CD4-positive, alpha-beta T cell (primary cell): ENCODE measurements at regions of chr5 and their contacts with region 1.

Region 1: GRCh38 chr5:172714491-172715421 is 56.2 kb downstream of the DUSP1 start:
- DNase-seq: peak; percentile 44 to 85 (median 62)
- ATAC-seq: peak; percentile 80
- H3K4me3 ChIP-seq: no peak overlapping the region
- H3K4me3 Mint-ChIP-seq: no peak overlapping the region
- H3K27ac ChIP-seq: no peak overlapping the region
- H3K27ac Mint-ChIP-seq: no peak overlapping the region
- H3K4me1 ChIP-seq: peaks cover 29% of the 10 kb centered on the region
- H3K4me1 Mint-ChIP-seq: peaks cover 8% of the 10 kb centered on the region
- H3K27me3 ChIP-seq: no peaks in the 10 kb centered on the region
- H3K27me3 Mint-ChIP-seq: peaks cover 5% of the 10 kb centered on the region
- CTCF ChIP-seq: peak; percentile 81

Region 2: DNA sequence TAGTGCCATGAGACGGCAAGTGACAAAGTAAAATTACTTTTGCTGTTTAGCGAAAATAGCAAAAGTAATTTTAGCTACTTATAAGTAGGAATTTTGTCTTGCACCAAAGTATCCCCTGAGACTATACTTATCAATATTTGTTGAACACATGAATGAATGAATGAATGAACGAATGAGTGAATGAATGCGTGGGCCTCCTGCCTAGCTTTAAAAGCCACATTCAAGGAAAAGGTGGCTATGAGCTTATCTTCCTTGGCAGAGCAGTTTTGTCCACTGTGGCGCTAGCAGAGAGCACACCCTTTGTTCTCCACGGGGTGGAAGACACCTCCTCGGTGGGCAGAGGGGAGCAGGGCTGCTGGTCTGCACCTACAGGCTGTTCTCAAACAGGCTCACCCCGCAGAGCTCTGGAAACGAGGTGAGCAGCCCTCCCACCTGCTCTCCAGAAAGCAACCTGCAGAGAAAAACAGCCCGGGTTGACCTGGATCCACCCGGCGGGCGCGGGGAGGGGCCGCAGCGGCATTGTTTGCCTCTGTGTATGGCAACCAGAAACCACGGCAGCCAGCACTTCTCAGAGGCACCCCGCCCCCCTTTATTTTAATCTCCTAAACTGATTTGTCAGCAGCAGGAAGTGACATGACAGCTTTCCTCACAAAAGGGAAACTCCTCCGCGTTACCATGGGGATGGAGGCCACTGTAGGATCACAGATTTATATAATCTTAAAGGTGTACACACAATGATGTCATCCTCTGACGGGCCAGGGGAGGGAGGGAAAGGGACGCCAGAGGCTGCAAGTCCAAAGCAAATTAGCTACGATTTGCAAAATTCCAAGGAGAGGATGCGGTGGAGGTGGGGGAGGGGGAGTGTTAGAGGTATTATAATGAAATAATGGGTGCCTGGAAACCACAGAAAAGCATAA is 50.4 kb after region 1 on chr5:
- CTCF ChIA-PET with region 1: interaction called, 38 read pairs
- POLR2A ChIA-PET with region 1: interaction called, 49 read pairs
- intact Hi-C with region 1: loop called (anchors 2 kb)
- DNase-seq: peak; percentile 87 to 100 (median 94)
- ATAC-seq: peak; percentile 75
- H3K4me3 ChIP-seq: peak overlapping the region; percentile 44
- H3K4me3 Mint-ChIP-seq: peak overlapping the region; percentile 71
- H3K27ac ChIP-seq: peak overlapping the region; percentile 89
- H3K27ac Mint-ChIP-seq: peak overlapping the region; percentile 95
- H3K4me1 ChIP-seq: peaks cover 59% of the 10 kb centered on the region
- H3K4me1 Mint-ChIP-seq: peaks cover 55% of the 10 kb centered on the region
- H3K27me3 ChIP-seq: no peaks in the 10 kb centered on the region
- H3K27me3 Mint-ChIP-seq: no peaks in the 10 kb centered on the region
- CTCF ChIP-seq: no peak

Region 3: GRCh38 chr5:172777881-172778814 is 63.4 kb after region 1 on chr5:
- CTCF ChIA-PET with region 1: interaction called, 38 read pairs
- POLR2A ChIA-PET with region 1: interaction called, 49 read pairs
- intact Hi-C with region 1: loop called (anchors 1 to 2 kb)
- DNase-seq: peak in 3 of 14 experiments; percentile 22 to 64 (median 54)
- ATAC-seq: peak; percentile 56
- H3K4me3 ChIP-seq: peak overlapping the region; percentile 27
- H3K4me3 Mint-ChIP-seq: peak overlapping the region; percentile 68
- H3K27ac ChIP-seq: peak overlapping the region; percentile 68 to 93
- H3K27ac Mint-ChIP-seq: peak overlapping the region; percentile 95
- H3K4me1 ChIP-seq: peaks cover 43% of the 10 kb centered on the region
- H3K4me1 Mint-ChIP-seq: peaks cover 45% of the 10 kb centered on the region
- H3K27me3 ChIP-seq: no peaks in the 10 kb centered on the region
- H3K27me3 Mint-ChIP-seq: no peaks in the 10 kb centered on the region
- CTCF ChIP-seq: no peak

Region 4: GRCh38 chr5:172932313-172933017 is 217.7 kb after region 1 on chr5:
- CTCF ChIA-PET with region 1: interaction called, 99 read pairs
- POLR2A ChIA-PET with region 1: interaction called, 5 read pairs
- intact Hi-C with region 1: loop called (anchors 1 kb)
- DNase-seq: peak; percentile 61 to 87 (median 70)
- ATAC-seq: peak; percentile 99
- H3K4me3 ChIP-seq: no peak overlapping the region
- H3K4me3 Mint-ChIP-seq: no peak overlapping the region
- H3K27ac ChIP-seq: no peak overlapping the region
- H3K27ac Mint-ChIP-seq: peak overlapping the region; percentile 23
- H3K4me1 ChIP-seq: peaks cover 6% of the 10 kb centered on the region
- H3K4me1 Mint-ChIP-seq: peaks cover 7% of the 10 kb centered on the region
- H3K27me3 ChIP-seq: no peaks in the 10 kb centered on the region
- H3K27me3 Mint-ChIP-seq: no peaks in the 10 kb centered on the region
- CTCF ChIP-seq: peak; percentile 87

Region 5: DNA sequence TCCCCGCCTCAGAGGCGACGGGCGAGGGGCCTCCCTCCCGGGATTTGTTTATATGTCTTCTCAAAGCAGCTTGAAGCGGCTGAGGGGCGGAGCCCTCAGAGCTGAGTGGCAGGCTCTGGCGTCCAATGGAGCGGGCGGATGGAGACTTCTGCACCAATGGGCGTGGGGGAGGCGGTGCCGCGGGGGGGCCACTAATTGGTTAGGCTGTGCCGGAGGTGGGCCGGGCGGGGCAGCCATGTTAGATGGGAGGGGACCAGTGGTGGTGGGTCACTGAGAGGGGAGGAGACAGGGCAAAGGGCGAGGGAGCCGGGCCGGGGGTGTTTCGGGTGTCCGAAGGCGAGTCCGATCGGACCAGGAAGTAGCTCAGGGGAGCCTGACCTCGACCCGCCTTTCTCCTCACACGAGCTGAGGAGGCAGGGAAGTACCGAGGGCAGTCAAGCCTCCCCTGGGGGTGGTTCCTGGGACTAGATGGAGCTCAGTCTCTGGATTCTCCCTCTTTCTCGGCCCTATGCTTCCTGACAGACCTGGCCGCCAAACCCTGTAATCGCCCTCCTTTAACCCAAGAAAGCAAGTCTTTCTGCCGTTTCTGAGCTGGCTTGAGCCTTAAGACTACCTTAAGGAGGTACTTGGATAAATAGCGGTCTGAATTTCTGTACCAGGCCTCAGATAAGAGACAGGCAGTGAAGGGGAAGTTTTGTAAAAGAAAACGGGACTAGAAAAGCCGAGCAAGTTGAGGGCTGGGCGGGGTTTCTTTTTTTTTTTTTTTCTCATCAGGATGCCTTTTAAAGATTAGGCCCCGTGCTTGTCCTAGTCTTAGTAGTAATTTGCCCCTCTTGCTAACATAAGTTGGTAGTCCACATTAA is 342.5 kb after region 1 on chr5:
- CTCF ChIA-PET with region 1: interaction called, 3 read pairs
- POLR2A ChIA-PET with region 1: no interaction called
- intact Hi-C with region 1: loop called in 1 of 2 experiments (anchors 10 kb)
- DNase-seq: peak; percentile 96 to 99 (median 98)
- ATAC-seq: peak; percentile 80
- H3K4me3 ChIP-seq: peak overlapping the region; percentile 69
- H3K4me3 Mint-ChIP-seq: peak overlapping the region; percentile 98
- H3K27ac ChIP-seq: peak overlapping the region; percentile 91 to 97
- H3K27ac Mint-ChIP-seq: peak overlapping the region; percentile 97
- H3K4me1 ChIP-seq: peaks cover 27% of the 10 kb centered on the region
- H3K4me1 Mint-ChIP-seq: peaks cover 70% of the 10 kb centered on the region
- H3K27me3 ChIP-seq: no peaks in the 10 kb centered on the region
- H3K27me3 Mint-ChIP-seq: no peaks in the 10 kb centered on the region
- CTCF ChIP-seq: no peak

Region 6: DNA sequence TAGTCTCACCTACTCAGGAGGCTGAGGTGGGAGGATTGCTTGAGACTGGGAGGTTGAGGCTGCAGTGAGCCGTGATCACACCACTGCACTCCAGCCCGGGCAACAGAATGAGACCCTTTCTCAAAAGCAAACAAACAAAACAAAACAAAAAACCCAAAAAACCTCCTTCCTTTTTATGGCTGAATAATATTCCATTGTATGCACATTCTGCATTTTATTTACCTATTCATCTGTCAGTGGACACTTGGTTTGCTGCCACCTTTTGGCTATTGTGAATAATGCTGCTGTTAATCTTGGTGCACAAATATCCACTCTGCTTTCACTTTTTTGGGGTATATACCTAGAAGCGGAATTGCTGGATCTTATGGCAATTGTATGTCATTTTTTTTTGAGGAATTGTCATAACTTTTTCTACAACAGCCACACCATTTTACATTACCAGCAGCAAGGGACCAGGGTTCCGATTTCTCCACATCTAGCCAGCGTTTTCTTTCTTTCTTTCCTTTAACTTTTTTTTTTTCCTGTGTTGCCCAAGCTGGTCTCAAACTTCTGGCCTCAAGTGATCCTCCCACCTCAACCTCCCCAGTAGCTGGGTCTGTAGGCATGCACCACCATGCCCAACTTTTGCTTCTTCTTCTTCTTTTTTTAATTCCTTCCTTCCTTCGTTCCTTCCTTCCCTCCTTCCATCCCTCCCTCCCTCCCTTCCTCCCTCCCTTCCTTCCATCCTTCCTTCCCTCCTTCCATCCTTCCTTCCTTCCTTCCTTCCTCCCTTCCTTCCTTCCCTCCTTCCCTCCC is 489.6 kb after region 1 on chr5:
- CTCF ChIA-PET with region 1: no interaction called
- POLR2A ChIA-PET with region 1: no interaction called
- intact Hi-C with region 1: loop called in 1 of 2 experiments (anchors 10 kb)
- DNase-seq: peak in 4 of 14 experiments; percentile 38 to 61 (median 54)
- ATAC-seq: peak; percentile 52
- H3K4me3 ChIP-seq: no peak overlapping the region
- H3K4me3 Mint-ChIP-seq: no peak overlapping the region
- H3K27ac ChIP-seq: no peak overlapping the region
- H3K27ac Mint-ChIP-seq: no peak overlapping the region
- H3K4me1 ChIP-seq: no peaks in the 10 kb centered on the region
- H3K4me1 Mint-ChIP-seq: no peaks in the 10 kb centered on the region
- H3K27me3 ChIP-seq: peaks cover 22 to 23% of the 10 kb centered on the region in 2 experiments
- H3K27me3 Mint-ChIP-seq: peaks cover 59% of the 10 kb centered on the region
- CTCF ChIP-seq: peak; percentile 62

Region 7: DNA sequence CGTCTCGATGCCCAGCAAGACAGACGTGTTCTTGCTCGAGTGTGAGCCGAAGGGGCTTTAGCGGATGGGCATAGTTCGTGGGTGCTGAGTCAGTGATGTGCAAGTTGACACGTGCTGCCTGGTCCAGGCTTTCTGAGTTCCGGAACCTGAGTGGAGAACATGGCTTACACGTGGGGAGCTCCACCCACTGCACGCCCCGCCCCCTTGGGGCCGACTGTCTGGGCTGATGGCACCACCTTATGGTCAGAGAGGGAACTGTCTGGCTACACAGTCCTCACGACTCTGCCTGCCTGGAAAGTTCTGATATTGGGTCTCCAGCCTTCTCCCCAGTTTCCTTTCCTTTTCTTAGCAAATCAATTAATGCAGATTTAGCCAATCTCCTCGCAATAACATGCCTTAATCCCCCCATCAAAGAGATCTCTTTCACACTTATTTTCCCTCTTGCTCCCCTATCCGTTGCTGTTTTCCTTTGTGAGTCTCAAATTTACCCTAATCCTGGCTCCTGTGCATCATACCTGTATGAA is 617.3 kb after region 1 on chr5:
- CTCF ChIA-PET with region 1: no interaction called
- POLR2A ChIA-PET with region 1: no interaction called
- intact Hi-C with region 1: loop called (anchors 5 to 10 kb)
- DNase-seq: peak; percentile 36 to 81 (median 54)
- ATAC-seq: peak; percentile 98
- H3K4me3 ChIP-seq: no peak overlapping the region
- H3K4me3 Mint-ChIP-seq: no peak overlapping the region
- H3K27ac ChIP-seq: no peak overlapping the region
- H3K27ac Mint-ChIP-seq: no peak overlapping the region
- H3K4me1 ChIP-seq: peaks cover 23% of the 10 kb centered on the region
- H3K4me1 Mint-ChIP-seq: peaks cover 20% of the 10 kb centered on the region
- H3K27me3 ChIP-seq: peaks cover 40 to 45% of the 10 kb centered on the region in 2 experiments
- H3K27me3 Mint-ChIP-seq: peaks cover 76% of the 10 kb centered on the region
- CTCF ChIP-seq: peak; percentile 26